Endothelial cell of umbilical vein (primary cell): ENCODE measurements at regions of chr20 and their contacts with region 1.

Region 1: GRCh38 chr20:64119681-64120341 is 12.4 kb upstream of the NPBWR2 start:
- DNase-seq: peak; percentile 8
- H3K4me3 ChIP-seq: no peak overlapping the region
- H3K27ac ChIP-seq: no peak overlapping the region
- H3K4me1 ChIP-seq: no peaks in the 10 kb centered on the region
- H3K27me3 ChIP-seq: peaks cover 9 to 10% of the 10 kb centered on the region in 2 experiments
- CTCF ChIP-seq: no peak
- POLR2A ChIP-seq: no peak

Region 2: GRCh38 chr20:63495741-63496595 is 623.8 kb before region 1 on chr20:
- CTCF ChIA-PET with region 1: interaction called, 5 read pairs
- POLR2A ChIA-PET with region 1: no interaction called
- dilution Hi-C with region 1: no loop called
- intact Hi-C with region 1: loop called (anchors 1 kb)
- DNase-seq: peak; percentile 44
- H3K4me3 ChIP-seq: no peak overlapping the region
- H3K27ac ChIP-seq: no peak overlapping the region
- H3K4me1 ChIP-seq: no peaks in the 10 kb centered on the region
- H3K27me3 ChIP-seq: no peaks in the 10 kb centered on the region
- CTCF ChIP-seq: peak; percentile 92 to 96
- POLR2A ChIP-seq: no peak

Region 3: GRCh38 chr20:63980806-63981728 is 138.7 kb before region 1 on chr20 and contains the start of gene PRPF6:
- CTCF ChIA-PET with region 1: interaction called, 18 read pairs
- POLR2A ChIA-PET with region 1: no interaction called
- dilution Hi-C with region 1: no loop called
- intact Hi-C with region 1: loop called (anchors 1 kb)
- DNase-seq: peak; percentile 94
- H3K4me3 ChIP-seq: peak within 1 kb of the TSS; percentile 25 to 67 (median 58)
- H3K27ac ChIP-seq: peak within 1 kb of the TSS; percentile 6
- H3K4me1 ChIP-seq: peaks cover 20% of the 10 kb centered on the region
- H3K27me3 ChIP-seq: no peaks in the 10 kb centered on the region
- CTCF ChIP-seq: peak; percentile 87 to 95
- POLR2A ChIP-seq: peak; percentile 66
- total RNA-seq, gene PRPF6: 64.2 and 67.4 TPM in 2 replicates

Region 4: GRCh38 chr20:64062596-64063388 is 57.0 kb before region 1 on chr20 and contains the start of gene TCEA2:
- CTCF ChIA-PET with region 1: interaction called, 4 read pairs
- POLR2A ChIA-PET with region 1: no interaction called
- dilution Hi-C with region 1: no loop called
- intact Hi-C with region 1: loop called (anchors 10 kb)
- DNase-seq: peak; percentile 93
- H3K4me3 ChIP-seq: peak within 1 kb of the TSS; percentile 72 to 91 (median 84)
- H3K27ac ChIP-seq: peak within 1 kb of the TSS; percentile 63
- H3K4me1 ChIP-seq: peaks cover 18% of the 10 kb centered on the region
- H3K27me3 ChIP-seq: no peaks in the 10 kb centered on the region
- CTCF ChIP-seq: no peak
- POLR2A ChIP-seq: peak; percentile 87
- total RNA-seq, gene TCEA2: 65.5 and 71.3 TPM in 2 replicates

Region 5: GRCh38 chr20:64079273-64080012 is 40.4 kb before region 1 on chr20 and contains the start of gene RGS19:
- CTCF ChIA-PET with region 1: interaction called, 66 read pairs
- POLR2A ChIA-PET with region 1: no interaction called
- dilution Hi-C with region 1: no loop called
- intact Hi-C with region 1: loop called (anchors 1 kb)
- DNase-seq: peak; percentile 57
- H3K4me3 ChIP-seq: peak within 1 kb of the TSS; percentile 71 to 94 (median 73)
- H3K27ac ChIP-seq: no peak within 1 kb of the TSS
- H3K4me1 ChIP-seq: peaks cover 20% of the 10 kb centered on the region
- H3K27me3 ChIP-seq: peaks cover 2 to 7% of the 10 kb centered on the region in 2 experiments
- CTCF ChIP-seq: no peak
- POLR2A ChIP-seq: peak; percentile 16
- total RNA-seq, gene RGS19: 27.8 and 28.3 TPM in 2 replicates

Region 6: GRCh38 chr20:64101731-64102621 is 17.8 kb before region 1 on chr20:
- CTCF ChIA-PET with region 1: interaction called, 22 read pairs
- POLR2A ChIA-PET with region 1: no interaction called
- dilution Hi-C with region 1: no loop called
- intact Hi-C with region 1: loop called (anchors 1 kb)
- DNase-seq: peak; percentile 21
- H3K4me3 ChIP-seq: no peak overlapping the region
- H3K27ac ChIP-seq: no peak overlapping the region
- H3K4me1 ChIP-seq: no peaks in the 10 kb centered on the region
- H3K27me3 ChIP-seq: peaks cover 19 to 22% of the 10 kb centered on the region in 2 experiments
- CTCF ChIP-seq: peak; percentile 78 to 86
- POLR2A ChIP-seq: no peak